Activated CD4-positive, alpha-beta T cell treated with anti-CD3 and anti-CD28 coated beads, Interleukin-2, amount 10 ng/mL, durations not matched to agents 24 days and 14 days (primary cell): ENCODE measurements at regions of chr14 and their contacts with region 1.

Region 1: GRCh38 chr14:67426983-67427606 is 15.1 kb upstream of the PLEK2 start:
- DNase-seq: peak; percentile 91
- H3K4me3 Mint-ChIP-seq: no peak overlapping the region
- H3K27ac Mint-ChIP-seq: no peak overlapping the region
- H3K4me1 Mint-ChIP-seq: peaks cover 3% of the 10 kb centered on the region
- H3K27me3 Mint-ChIP-seq: peaks cover 27% of the 10 kb centered on the region

Region 2: GRCh38 chr14:67526676-67527459 is 99.8 kb after region 1 on chr14:
- intact Hi-C with region 1: loop called (anchors 5 kb)
- DNase-seq: peak; percentile 82
- H3K4me3 Mint-ChIP-seq: no peak overlapping the region
- H3K27ac Mint-ChIP-seq: no peak overlapping the region
- H3K4me1 Mint-ChIP-seq: no peaks in the 10 kb centered on the region
- H3K27me3 Mint-ChIP-seq: peaks cover 56% of the 10 kb centered on the region

Region 3: DNA sequence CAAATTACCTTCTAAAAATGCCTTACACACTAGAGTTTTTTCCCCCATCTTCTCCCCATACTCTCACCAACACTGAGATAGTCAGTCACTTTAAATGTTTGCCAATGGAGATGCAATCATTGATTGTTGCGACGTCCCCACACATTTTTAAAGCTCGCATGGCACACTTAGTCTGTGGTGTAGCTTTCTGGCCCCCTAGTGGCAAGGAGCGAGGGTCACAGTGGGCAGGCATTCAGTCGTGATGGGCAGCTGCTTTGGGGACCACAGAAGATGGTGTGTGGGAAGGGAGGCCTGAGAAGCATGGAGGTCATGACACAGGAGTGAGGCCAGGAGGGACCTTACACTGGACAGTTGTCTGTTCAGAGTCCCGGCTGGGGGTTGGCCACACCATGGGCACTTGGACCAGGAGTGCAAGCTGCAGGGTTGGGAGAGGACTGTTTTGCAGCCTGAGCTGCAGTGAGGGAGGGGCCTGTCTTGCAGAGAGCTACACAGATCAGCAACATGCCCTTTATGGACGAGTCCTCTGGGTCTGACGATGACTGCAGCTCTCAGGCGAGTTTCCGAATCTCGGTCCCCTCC is 144.3 kb after region 1 on chr14:
- intact Hi-C with region 1: loop called (anchors 1 kb)
- DNase-seq: peak; percentile 90
- H3K4me3 Mint-ChIP-seq: no peak overlapping the region
- H3K27ac Mint-ChIP-seq: no peak overlapping the region
- H3K4me1 Mint-ChIP-seq: peaks cover 14% of the 10 kb centered on the region
- H3K27me3 Mint-ChIP-seq: no peaks in the 10 kb centered on the region